ENCODE measurements at regions of chr6 and their contacts with region 1.

Region 1: DNA sequence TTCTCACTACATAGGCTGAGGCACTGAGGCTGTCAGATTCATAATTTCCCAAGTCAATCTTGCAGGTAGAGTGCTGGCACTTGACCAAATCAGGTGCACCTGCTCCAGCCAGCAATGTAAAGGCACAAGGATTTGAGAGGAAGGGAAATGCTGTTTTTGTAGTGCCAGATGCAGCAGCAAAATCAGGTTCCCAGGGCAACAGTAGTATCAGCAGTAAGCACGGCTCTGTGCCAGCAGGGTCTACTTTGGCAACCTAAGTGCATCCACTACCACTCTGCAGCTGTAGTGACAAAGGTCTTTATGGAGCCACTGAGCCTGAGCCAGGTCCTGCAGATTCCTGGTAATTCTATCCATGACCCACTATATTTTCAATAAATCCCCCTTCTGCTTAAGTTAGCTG is 329.5 kb downstream of the TPBG start:
- DNase-seq: no peak
- ATAC-seq: no peak
- H3K4me3 ChIP-seq: no peak overlapping the region
- H3K27ac ChIP-seq: no peak overlapping the region
- H3K4me1 ChIP-seq: no peaks in the 10 kb centered on the region
- H3K27me3 ChIP-seq: peaks cover 2% of the 10 kb centered on the region
- CTCF ChIP-seq: no peak
- POLR2A ChIP-seq: no peak
- RAD21 ChIP-seq: no peak

Region 2: DNA sequence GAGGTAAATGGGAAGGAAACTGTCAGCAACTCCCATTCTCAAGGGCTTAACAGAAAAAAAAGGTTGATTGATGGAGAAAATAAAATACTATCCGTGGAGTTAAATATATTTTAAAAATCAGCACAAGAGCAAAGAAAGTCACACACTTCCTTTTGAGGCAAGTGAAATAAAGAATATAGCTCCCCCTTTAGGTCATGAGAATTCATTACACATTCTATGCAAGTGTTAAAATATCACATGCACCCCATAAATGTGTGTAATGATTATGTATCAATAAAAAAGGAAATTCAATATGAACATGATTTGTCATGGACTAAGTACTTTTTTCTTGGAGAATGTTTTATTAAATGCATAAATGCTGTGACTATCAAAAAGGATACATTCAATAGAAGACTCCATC is 19.8 kb after region 1 on chr6:
- CTCF ChIA-PET with region 1: no interaction called
- POLR2A ChIA-PET with region 1: no interaction called
- dilution Hi-C with region 1: no loop called
- in situ Hi-C with region 1: no loop called
- intact Hi-C with region 1: loop called (anchors 1 kb)
- DNase-seq: no peak
- ATAC-seq: no peak
- H3K4me3 ChIP-seq: no peak overlapping the region
- H3K27ac ChIP-seq: no peak overlapping the region
- H3K4me1 ChIP-seq: no peaks in the 10 kb centered on the region
- H3K27me3 ChIP-seq: no peaks in the 10 kb centered on the region; the same call in 1 of the 2 replicates
- CTCF ChIP-seq: 0 out of 2 replicates have a peak, but pooled peaks have one; percentile 26
- POLR2A ChIP-seq: no peak
- RAD21 ChIP-seq: peak; percentile 38; the same call in 1 of the 2 replicates